ENCODE measurements at regions of chr3 and their contacts with region 1.

Region 1: GRCh38 chr3:20264934-20265567 is 79.0 kb upstream of the SGO1 start:
- DNase-seq: no peak
- ATAC-seq: no peak
- H3K4me3 ChIP-seq: no peak overlapping the region
- H3K27ac ChIP-seq: no peak overlapping the region
- H3K4me1 ChIP-seq: no peaks in the 10 kb centered on the region
- H3K27me3 ChIP-seq: no peaks in the 10 kb centered on the region

Region 2: DNA sequence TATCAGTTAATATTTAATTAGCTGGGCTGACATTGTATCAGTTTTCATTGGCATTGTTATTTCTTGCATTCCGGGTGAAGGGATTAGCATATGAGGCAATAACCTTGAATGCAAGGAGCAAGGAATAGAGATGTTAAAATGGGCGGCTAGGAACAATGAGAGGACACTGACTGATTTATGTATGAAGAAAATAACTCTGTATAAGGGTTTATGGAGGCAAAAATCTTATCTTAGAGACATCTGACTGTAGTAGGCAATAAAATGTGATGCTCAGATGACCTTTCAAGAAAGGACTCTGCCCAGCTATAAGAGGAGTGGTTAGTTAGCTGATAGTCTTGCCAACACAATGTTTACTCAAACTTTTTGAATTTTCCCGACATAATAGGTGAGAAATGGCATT is 489.3 kb before region 1 on chr3:
- intact Hi-C with region 1: no loop called
- DNase-seq: no peak
- ATAC-seq: no peak
- H3K4me3 ChIP-seq: no peak overlapping the region
- H3K27ac ChIP-seq: no peak overlapping the region
- H3K4me1 ChIP-seq: no peaks in the 10 kb centered on the region
- H3K27me3 ChIP-seq: no peaks in the 10 kb centered on the region

Region 3: DNA sequence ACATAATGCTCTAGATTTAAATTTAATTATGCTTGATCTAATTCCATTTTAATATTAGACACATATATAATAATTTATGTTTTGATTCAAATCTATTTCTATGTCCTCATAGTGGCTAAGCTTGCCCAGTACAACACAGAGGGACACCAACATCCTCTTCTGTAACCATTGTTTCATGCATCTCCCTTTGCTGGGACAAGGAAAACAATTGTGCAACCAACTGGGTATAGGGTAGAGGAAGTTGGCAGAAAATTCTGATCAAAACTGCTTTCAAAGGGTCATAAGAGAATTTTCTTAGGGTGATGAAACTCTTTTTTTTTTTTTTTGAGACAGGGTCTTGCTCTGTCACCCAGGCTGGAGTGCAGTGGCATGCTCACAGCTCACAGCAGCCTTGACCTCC is 42.3 kb after region 1 on chr3:
- intact Hi-C with region 1: loop called in 1 of 2 experiments (anchors 5 kb)
- DNase-seq: no peak
- ATAC-seq: no peak
- H3K4me3 ChIP-seq: no peak overlapping the region
- H3K27ac ChIP-seq: no peak overlapping the region
- H3K4me1 ChIP-seq: no peaks in the 10 kb centered on the region
- H3K27me3 ChIP-seq: no peaks in the 10 kb centered on the region

Region 4: DNA sequence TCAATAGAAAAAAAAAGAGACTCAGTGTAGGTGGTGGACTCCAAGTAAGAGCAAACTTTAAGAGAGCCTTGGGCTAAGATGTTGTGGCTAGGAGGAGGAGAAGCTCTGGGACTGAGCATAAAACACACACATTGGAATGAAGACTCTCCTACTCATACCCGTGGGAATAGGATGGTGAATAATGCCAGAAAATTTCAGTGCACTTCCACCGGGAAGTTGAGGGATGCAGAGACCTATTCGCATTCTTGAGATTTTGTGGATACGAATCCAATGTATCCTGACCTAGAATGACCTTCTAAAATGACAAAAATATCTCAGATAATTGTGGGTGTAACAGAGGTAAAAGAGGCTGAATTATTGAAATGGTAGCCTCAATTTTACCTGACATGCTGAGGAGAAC is 309.7 kb after region 1 on chr3:
- intact Hi-C with region 1: no loop called
- DNase-seq: no peak
- ATAC-seq: no peak
- H3K4me3 ChIP-seq: no peak overlapping the region
- H3K27ac ChIP-seq: no peak overlapping the region
- H3K4me1 ChIP-seq: no peaks in the 10 kb centered on the region
- H3K27me3 ChIP-seq: no peaks in the 10 kb centered on the region